Endothelial cell of umbilical vein (primary cell): ENCODE measurements at regions of chr22 and their contacts with region 1.

Region 1: GRCh38 chr22:39543095-39543494 is 10.5 kb upstream of the RPS19BP1 start:
- DNase-seq: no peak
- H3K4me3 ChIP-seq: no peak overlapping the region
- H3K27ac ChIP-seq: no peak overlapping the region
- H3K4me1 ChIP-seq: no peaks in the 10 kb centered on the region
- H3K27me3 ChIP-seq: no peaks in the 10 kb centered on the region
- CTCF ChIP-seq: peak; percentile 39 to 68
- POLR2A ChIP-seq: no peak

Region 2: DNA sequence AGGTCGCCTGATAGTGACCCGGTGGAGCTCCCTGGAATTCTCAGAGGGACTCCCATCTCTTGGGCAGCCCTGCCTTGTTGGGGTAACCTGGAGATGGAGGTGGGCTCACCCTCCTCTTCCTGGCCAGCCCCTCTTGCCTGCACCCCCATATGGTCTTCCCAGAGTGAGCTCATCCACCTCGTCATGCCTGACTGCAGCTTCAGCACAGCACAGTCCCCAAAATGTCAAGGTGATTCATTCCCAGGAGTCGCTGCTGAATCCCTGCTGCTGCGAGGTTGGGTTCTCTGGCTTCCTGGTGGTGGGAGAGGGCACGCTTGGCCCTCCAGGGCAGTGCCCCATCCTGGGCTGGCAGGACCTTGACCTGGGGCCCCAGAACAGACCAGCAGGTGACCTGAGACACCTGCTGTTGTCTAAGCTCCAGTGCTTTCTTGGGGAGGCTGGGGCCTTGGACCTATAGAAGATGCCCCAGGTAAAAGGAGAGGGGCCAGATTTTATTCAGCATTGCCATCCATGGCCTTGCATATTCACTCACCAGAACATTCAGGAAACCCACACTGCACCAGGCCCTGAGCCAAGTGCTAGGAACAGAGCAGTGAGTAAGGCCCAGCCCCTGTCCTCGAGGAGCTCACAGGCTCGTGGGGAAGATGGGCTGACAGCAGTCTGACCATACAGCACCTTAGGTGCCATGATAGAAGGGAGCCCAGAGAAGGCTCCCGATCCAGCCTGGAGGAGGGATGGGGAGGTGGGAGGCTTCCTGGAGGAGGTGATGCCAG is 100.4 kb after region 1 on chr22:
- CTCF ChIA-PET with region 1: no interaction called
- POLR2A ChIA-PET with region 1: no interaction called
- dilution Hi-C with region 1: no loop called
- intact Hi-C with region 1: no loop called
- DNase-seq: no peak
- H3K4me3 ChIP-seq: no peak overlapping the region
- H3K27ac ChIP-seq: no peak overlapping the region
- H3K4me1 ChIP-seq: no peaks in the 10 kb centered on the region
- H3K27me3 ChIP-seq: peaks cover 2 to 3% of the 10 kb centered on the region in 2 experiments
- CTCF ChIP-seq: no peak
- POLR2A ChIP-seq: no peak

Region 3: DNA sequence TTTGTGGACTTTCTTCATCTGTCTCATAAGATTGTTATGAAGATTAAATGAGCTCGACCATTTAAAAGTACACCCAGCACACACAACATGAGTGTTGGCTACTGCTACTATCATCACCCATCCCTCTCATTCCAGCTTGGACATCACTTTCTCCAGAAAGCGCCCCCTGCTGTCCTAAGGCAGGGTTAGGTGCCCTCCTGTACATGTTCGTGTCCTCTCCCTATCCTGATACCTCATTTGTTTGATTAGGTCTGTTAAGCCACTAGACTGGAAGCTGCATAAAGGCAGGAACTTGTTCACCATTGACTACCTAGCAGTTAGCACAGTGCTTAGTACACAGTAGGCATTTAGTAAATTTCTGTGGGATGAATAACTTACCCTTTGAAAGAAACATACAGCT is 265.0 kb after region 1 on chr22:
- CTCF ChIA-PET with region 1: interaction called, 62 read pairs
- POLR2A ChIA-PET with region 1: no interaction called
- dilution Hi-C with region 1: no loop called
- intact Hi-C with region 1: no loop called
- DNase-seq: peak; percentile 28
- H3K4me3 ChIP-seq: no peak overlapping the region
- H3K27ac ChIP-seq: no peak overlapping the region
- H3K4me1 ChIP-seq: no peaks in the 10 kb centered on the region
- H3K27me3 ChIP-seq: peaks cover 14 to 16% of the 10 kb centered on the region in 2 experiments
- CTCF ChIP-seq: peak; percentile 61 to 64
- POLR2A ChIP-seq: no peak

Region 4: DNA sequence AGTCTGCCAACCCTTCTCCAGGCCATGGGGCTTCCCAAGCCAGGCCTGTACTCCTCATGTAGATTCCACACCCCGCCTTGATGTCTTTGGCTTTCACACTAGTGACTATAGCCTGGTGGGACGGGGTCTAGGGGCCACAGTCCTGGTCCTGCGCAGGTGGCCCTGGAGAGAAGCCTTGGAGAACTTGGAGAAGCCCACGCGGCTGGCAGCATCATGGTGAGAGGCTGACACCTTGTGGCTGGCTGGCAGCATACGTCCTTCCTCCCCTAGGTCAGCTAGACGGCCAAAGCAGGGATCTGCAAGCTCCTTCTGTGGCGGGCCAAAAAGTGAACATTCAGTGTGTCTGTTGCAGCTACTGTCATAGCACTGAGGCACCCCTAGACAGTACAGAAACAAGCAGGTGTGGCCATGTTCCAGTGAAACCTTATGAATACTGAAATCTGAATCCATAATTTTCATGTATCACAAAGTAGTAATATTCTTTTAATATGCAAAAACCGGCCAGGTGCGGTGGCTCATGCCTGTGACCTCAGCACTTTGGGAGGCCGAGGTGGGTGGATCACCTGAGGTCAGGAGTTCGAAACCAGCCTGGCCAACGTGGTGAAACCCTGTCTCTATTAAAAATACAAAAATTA is 493.6 kb after region 1 on chr22:
- CTCF ChIA-PET with region 1: interaction called, 37 read pairs
- POLR2A ChIA-PET with region 1: no interaction called
- dilution Hi-C with region 1: no loop called
- intact Hi-C with region 1: loop called (anchors 1 kb)
- DNase-seq: peak; percentile 69
- H3K4me3 ChIP-seq: no peak overlapping the region
- H3K27ac ChIP-seq: no peak overlapping the region
- H3K4me1 ChIP-seq: peaks cover 11% of the 10 kb centered on the region
- H3K27me3 ChIP-seq: peaks cover 3 to 24% of the 10 kb centered on the region in 2 experiments
- CTCF ChIP-seq: peak; percentile 62 to 84
- POLR2A ChIP-seq: no peak

Region 5: DNA sequence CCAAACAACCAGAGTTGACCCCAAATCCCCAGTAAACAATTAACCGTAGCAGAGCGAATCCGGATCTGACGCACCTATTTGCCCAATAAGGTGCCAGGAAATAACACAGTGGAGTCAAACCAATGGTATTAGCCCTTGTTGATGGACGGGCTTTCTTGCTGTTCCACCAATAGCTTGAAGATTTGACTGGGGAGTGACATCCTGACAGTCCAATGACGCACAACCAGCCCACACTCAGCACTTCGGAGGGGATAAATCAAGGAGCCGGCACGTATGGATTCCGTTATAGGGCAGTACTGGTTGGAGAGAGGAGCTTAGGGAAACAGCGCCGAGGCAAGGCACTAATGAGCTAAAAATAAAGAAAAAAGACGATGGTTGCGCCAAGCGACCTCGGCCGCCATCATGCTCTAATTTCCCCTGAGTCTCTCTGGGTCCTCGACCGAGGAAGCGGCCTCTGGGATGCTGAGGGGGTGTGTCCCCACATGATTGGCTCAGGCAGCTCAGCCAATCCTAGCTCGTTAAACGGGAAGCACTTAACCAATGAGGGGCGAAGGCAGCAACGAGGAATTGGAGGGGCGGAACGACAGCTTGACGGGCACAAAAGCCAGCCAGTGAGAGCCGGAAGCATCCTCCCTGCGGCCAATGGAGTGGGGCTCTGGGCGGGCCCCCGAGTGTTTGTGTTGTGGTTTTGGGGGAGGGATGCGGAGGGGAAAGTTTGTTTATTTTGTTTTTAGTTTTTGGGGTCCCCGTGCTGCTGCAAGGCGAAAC is 501.2 kb after region 1 on chr22:
- CTCF ChIA-PET with region 1: interaction called, 13 read pairs
- POLR2A ChIA-PET with region 1: no interaction called
- dilution Hi-C with region 1: no loop called
- intact Hi-C with region 1: no loop called
- DNase-seq: peak; percentile 99
- H3K4me3 ChIP-seq: peak overlapping the region; percentile 48 to 95 (median 68)
- H3K27ac ChIP-seq: peak overlapping the region; percentile 87
- H3K4me1 ChIP-seq: peaks cover 19% of the 10 kb centered on the region
- H3K27me3 ChIP-seq: peaks cover 0 to 16% of the 10 kb centered on the region in 2 experiments
- CTCF ChIP-seq: no peak
- POLR2A ChIP-seq: no peak